ENCODE measurements at regions of chr4 and their contacts with region 1.

Region 1: DNA sequence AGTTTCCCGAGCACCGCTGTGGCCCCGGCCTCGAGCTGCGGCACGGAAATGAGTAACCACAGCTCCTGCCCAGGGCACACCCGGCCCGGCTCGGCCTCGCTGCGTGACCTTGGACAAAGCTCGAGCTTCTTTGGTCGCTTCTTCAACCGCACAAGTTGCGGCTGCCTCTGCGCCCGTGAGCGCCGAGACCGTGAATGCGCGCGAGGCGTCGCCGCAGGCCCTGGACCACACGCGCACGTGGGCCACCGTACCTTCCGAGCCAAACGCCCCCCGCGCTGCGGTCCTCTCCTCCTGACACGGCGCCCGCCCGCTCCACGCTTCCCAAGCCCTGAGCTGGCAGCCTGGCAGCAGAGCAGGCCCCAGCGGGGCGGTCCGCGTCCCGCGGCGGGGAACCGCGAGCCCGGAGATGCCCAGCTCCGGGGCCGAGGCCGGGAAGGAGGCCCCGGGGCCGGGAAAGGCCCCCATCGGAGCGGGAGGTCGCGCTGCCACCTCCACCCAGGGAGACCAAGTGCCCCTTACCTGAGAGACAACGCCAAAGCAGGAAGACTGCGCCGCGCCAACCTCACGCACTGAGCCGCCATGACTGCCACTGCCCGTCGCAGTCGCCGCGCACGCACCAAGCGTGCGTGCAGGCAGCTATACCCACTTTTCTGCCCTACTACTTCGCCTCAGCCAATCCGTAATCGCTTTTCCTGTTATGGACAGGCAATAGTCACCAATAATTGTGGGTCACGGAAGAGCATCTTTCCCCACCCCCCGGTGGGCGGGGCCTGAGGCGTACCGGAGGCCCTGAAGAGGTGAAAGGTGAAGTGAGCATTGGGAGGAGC is at the start of gene GRPEL1:
- DNase-seq: peak; percentile 98
- ATAC-seq: peak; percentile 88
- H3K4me3 ChIP-seq: peak within 1 kb of the TSS; percentile 91 to 93
- H3K27ac ChIP-seq: peak within 1 kb of the TSS; percentile 78
- H3K4me1 ChIP-seq: peaks cover 11 to 28% of the 10 kb centered on the region in 2 experiments; a peak in 3 of 4 replicates
- H3K27me3 ChIP-seq: no peaks in the 10 kb centered on the region
- CTCF ChIP-seq: no peak
- POLR2A ChIP-seq: peak; percentile 96
- RAD21 ChIP-seq: no peak
- total RNA-seq, gene GRPEL1: 80.1 TPM

Region 2: GRCh38 chr4:6269616-6270511 is 797.8 kb before region 1 on chr4 and contains the start of gene WFS1:
- CTCF ChIA-PET with region 1: no interaction called
- POLR2A ChIA-PET with region 1: no interaction called
- RAD21 ChIA-PET with region 1: no interaction called
- intact Hi-C with region 1: loop called (anchors 5 kb)
- DNase-seq: peak; percentile 94
- ATAC-seq: peak; percentile 98
- H3K4me3 ChIP-seq: peak within 1 kb of the TSS; percentile 72 to 87
- H3K27ac ChIP-seq: peak within 1 kb of the TSS; percentile 47; the same call in 1 of the 2 replicates
- H3K4me1 ChIP-seq: peaks cover 39 to 43% of the 10 kb centered on the region in 2 experiments
- H3K27me3 ChIP-seq: no peaks in the 10 kb centered on the region
- CTCF ChIP-seq: no peak
- POLR2A ChIP-seq: peak; percentile 40
- RAD21 ChIP-seq: no peak
- total RNA-seq, gene WFS1: 21.5 TPM

Region 3: GRCh38 chr4:6298035-6298434 is 769.6 kb before region 1 on chr4:
- CTCF ChIA-PET with region 1: no interaction called
- POLR2A ChIA-PET with region 1: no interaction called
- RAD21 ChIA-PET with region 1: no interaction called
- intact Hi-C with region 1: no loop called
- DNase-seq: no peak
- ATAC-seq: no peak
- H3K4me3 ChIP-seq: no peak overlapping the region
- H3K27ac ChIP-seq: no peak overlapping the region
- H3K4me1 ChIP-seq: no peaks in the 10 kb centered on the region
- H3K27me3 ChIP-seq: no peaks in the 10 kb centered on the region
- CTCF ChIP-seq: no peak
- POLR2A ChIP-seq: no peak
- RAD21 ChIP-seq: no peak

Region 4: DNA sequence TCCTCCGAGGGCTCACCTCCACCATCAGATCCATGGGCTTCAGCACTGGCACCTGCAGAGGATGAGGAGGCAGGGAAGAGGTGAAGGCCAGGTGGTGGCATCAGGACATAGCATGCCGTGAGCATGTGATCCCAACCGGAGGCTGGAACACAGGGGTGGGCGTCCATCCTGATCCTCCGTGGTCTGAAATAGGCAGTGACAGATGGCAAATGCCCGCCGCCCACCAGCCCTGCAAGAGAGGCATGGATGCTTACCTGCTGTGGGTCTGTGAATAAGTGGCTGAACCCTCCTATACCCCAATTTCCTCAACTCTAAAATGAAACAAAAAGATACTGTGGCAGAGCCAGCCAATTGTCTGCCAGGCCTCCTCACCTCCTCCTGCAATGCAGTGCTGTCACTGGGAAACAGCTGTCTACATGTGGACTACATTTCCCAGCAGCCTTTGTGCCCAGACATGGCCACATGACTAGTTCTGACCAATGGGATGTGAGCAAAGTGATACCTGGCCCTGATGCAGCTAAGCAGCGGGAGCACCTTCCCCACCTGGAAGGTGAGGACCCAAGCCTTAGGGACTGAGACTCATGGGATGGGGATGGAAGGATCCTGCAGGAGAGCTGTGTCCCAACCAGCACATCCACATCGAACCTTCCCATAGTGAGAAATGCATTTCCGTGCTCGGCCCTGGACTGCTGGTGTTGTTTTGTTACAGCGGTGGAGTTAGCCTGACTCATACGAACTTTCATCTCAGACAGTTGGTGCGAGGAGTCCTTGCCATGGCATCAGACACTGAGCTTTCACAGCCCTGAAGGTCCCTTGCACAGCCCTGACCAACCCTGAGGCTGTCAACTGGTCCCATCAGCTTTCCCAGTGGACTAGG is 694.8 kb before region 1 on chr4:
- CTCF ChIA-PET with region 1: no interaction called
- POLR2A ChIA-PET with region 1: no interaction called
- RAD21 ChIA-PET with region 1: no interaction called
- intact Hi-C with region 1: no loop called
- DNase-seq: peak; percentile 54
- ATAC-seq: peak; percentile 93
- H3K4me3 ChIP-seq: no peak overlapping the region
- H3K27ac ChIP-seq: no peak overlapping the region
- H3K4me1 ChIP-seq: no peaks in the 10 kb centered on the region
- H3K27me3 ChIP-seq: no peaks in the 10 kb centered on the region
- CTCF ChIP-seq: no peak
- POLR2A ChIP-seq: no peak
- RAD21 ChIP-seq: no peak

Region 5: DNA sequence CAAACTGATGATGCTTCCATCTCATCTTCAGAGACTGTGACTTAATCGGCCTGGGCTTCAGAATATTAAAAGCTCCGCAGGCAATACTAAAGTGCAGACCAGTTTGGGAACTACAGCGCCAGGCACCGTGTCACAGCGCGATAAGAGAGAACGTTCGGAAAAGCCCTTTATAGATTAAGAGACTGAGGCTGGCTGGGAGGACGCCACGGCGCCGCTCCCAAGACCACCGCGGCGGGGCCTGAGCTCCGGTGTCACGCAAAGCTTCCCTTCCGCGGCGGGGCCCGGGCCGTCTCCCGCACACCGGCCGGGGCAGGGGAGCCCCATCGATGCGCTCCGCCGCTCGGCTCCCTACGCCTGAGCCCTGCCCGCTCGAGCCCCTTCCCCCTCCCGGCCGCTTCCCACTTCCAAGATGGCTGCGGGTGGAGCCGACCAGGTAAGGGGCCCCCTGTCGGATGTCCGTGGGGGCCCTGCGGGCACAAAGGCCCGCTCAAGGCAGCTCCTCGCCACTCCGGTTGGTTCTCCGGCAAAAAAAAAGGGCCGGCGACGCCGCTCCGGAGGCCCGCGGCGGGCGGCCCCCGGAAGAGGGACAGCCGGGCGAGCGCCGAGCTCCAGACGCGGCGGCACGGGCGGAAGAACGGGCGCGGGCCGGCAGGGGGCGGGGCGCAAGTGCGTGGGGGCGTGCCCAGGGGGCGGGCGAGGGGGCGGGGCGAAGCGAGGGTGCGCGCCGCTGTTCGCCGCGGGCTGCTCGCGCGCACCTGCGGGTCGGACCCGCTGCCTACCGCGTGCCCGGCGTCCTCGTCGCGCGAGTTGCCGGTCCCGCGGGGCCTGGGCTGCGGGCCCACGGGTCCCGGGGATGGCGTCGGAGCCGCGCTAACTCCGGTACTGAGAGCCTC is 158.3 kb before region 1 on chr4 and contains the start of gene TBC1D14:
- CTCF ChIA-PET with region 1: interaction called, 8 read pairs
- POLR2A ChIA-PET with region 1: no interaction called
- RAD21 ChIA-PET with region 1: no interaction called
- intact Hi-C with region 1: loop called (anchors 1 kb)
- DNase-seq: peak; percentile 68
- ATAC-seq: peak; percentile 87
- H3K4me3 ChIP-seq: peak within 1 kb of the TSS; percentile 72 to 88
- H3K27ac ChIP-seq: peak within 1 kb of the TSS; percentile 95
- H3K4me1 ChIP-seq: peaks cover 11 to 35% of the 10 kb centered on the region in 2 experiments
- H3K27me3 ChIP-seq: no peaks in the 10 kb centered on the region
- CTCF ChIP-seq: peak in 1 of 3 experiments; percentile 20; a peak in 1 of 6 replicates
- POLR2A ChIP-seq: peak; percentile 37
- RAD21 ChIP-seq: no peak
- total RNA-seq, gene TBC1D14: 62.9 TPM

Region 6: DNA sequence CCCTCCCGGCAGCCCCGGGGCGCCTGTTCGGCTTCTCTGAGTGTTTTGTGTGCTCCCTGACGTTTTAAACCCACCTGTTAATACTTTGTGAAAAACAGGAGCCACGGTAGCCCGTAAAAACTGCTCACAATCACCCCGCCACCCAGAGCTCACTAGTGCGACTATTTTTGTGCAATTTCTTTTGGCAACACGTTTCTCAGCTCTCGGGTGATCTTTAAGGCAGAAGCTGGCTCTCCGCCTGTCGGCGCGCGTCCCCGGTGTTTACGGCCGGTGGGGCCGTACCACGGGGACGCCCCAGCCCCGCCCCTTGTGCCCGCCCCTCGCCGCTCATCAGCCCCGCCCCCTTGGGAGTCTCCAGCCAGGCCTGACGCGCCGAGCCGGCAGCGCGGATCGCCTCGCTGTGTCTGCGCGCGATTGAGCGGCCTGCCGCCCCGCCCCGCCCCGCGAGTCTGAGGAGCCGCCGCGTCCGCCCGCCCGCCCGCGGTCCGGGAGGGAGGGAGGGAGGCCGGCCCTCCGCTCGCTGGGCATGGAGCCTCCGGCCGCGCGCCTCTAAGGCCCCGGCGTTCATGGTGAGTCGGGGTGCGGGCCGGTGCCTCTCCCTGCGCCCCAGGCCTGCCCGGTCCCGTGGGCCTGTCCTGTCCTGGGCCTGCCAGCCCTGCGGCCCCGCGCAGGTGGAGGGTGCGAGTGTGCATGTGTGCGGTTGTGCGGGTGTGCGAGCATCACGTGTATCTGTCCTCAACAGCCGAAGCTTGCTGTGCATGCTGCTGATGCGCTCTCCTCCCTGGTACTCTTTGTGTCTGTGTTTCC is 80.7 kb before region 1 on chr4:
- CTCF ChIA-PET with region 1: no interaction called
- POLR2A ChIA-PET with region 1: interaction called, 5 read pairs
- RAD21 ChIA-PET with region 1: no interaction called
- intact Hi-C with region 1: loop called (anchors 1 kb)
- DNase-seq: peak; percentile 71
- ATAC-seq: peak; percentile 91
- H3K4me3 ChIP-seq: peak overlapping the region; percentile 84 to 90
- H3K27ac ChIP-seq: peak overlapping the region; percentile 72
- H3K4me1 ChIP-seq: peaks cover 15 to 36% of the 10 kb centered on the region in 2 experiments; a peak in 2 of 4 replicates
- H3K27me3 ChIP-seq: no peaks in the 10 kb centered on the region
- CTCF ChIP-seq: no peak
- POLR2A ChIP-seq: no peak
- RAD21 ChIP-seq: no peak

Region 7: DNA sequence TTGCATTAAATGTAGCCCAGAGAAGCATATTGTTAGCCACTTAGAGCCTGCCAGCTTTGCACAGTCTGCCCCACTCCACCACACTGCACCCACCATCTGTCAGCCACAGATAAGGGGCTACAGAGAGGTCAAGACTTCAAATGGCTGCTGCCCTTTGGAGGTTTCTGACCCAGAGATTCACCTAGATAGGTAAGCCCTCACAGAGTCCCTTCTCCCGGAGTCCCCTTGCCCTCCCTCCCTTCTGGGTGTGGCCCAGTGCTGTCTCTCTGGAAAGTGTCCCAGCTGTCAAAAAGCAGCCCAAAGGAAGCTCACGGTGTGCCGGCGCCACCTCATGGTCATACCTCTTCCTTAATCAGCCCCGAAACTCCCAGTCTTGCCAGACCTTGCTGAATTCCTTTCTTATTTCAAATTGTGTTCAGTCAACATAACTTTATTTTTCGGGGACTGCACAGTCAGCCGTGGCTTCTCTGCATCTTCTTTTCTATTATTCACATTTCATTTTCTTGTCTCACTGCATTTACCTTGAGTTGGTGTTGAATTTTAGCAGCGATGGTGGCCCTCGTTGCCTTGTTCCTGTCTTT is 14.3 kb after region 1 on chr4:
- CTCF ChIA-PET with region 1: interaction called, 10 read pairs
- POLR2A ChIA-PET with region 1: no interaction called
- RAD21 ChIA-PET with region 1: no interaction called
- intact Hi-C with region 1: no loop called
- DNase-seq: peak; percentile 74
- ATAC-seq: peak; percentile 100
- H3K4me3 ChIP-seq: no peak overlapping the region
- H3K27ac ChIP-seq: no peak overlapping the region
- H3K4me1 ChIP-seq: peaks cover 0 to 9% of the 10 kb centered on the region in 2 experiments; a peak in 2 of 4 replicates
- H3K27me3 ChIP-seq: peaks cover 15% of the 10 kb centered on the region; the same call in 1 of the 2 replicates
- CTCF ChIP-seq: peak; percentile 71 to 84 (median 80)
- POLR2A ChIP-seq: no peak
- RAD21 ChIP-seq: peak; percentile 93